GM12878 (cell line): ENCODE measurements at regions of chr1 and their contacts with region 1.

Region 1: GRCh38 chr1:14733048-14733778 is 134.7 kb downstream of the KAZN start:
- DNase-seq: peak; percentile 65
- ATAC-seq: peak; percentile 86
- H3K4me3 ChIP-seq: no peak overlapping the region
- H3K27ac ChIP-seq: peak overlapping the region; percentile 17; the same call in 1 of the 2 replicates
- H3K4me1 ChIP-seq: peaks cover 8% of the 10 kb centered on the region
- H3K27me3 ChIP-seq: no peaks in the 10 kb centered on the region
- CTCF ChIP-seq: no peak
- EP300 ChIP-seq: peak; percentile 23 to 27; a peak in 2 of 4 replicates
- POLR2A ChIP-seq: no peak
- RAD21 ChIP-seq: 0 out of 2 replicates have a peak, but pooled peaks have one; percentile 1

Region 2: DNA sequence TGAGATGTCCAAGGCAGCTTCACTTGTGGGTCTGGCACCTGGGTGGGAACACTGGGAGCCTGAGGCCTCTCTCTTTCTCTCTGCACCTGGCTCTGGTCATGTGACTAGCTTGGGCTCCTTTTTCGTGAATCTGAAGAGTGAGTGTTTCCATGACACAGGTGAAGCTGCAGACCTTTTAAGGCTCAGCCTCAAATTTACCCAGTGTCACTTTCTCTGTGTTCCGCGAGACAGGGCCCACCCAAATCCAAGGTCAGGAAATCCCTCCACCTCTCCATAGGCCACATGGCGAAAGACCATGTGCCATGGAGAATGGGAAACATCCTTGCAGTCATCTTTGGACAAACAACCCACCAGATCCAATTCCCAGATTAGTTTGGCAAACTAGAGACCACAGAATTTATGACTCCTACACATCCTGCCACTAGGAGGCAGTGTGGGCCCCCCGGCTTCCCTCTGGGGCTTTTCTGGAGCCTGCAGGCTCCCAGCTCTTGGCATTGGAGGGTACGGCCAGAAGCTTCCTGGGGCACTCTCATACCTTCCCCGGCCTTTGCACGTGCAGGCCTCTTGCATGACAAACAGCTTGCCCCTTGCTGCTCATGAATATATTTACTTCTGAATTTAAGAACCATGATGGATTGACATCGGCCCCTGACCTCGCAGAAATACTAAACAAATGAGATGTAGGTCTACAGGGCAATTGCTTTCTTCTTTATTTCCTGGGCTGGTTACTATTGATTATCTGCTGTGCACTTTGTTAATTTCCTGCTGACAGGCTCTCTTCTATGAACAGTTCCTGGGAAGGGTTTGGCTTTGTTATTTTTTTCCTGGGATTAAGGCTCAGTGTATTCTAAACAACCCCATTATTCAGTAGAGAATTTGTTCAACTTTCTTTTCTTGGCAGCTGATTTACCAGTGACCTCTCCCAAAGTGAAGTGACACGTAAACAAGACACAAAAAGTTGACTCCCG is 46.0 kb after region 1 on chr1:
- CTCF ChIA-PET with region 1: interaction called, 11 read pairs
- POLR2A ChIA-PET with region 1: no interaction called
- RAD21 ChIA-PET with region 1: no interaction called
- SMC1A ChIA-PET with region 1: interaction called, 7 read pairs
- in situ Hi-C with region 1: no loop called
- intact Hi-C with region 1: no loop called
- DNase-seq: no peak
- ATAC-seq: peak; percentile 48; the same call in 1 of the 3 replicates
- H3K4me3 ChIP-seq: no peak overlapping the region
- H3K27ac ChIP-seq: no peak overlapping the region
- H3K4me1 ChIP-seq: no peaks in the 10 kb centered on the region
- H3K27me3 ChIP-seq: no peaks in the 10 kb centered on the region
- CTCF ChIP-seq: peak; percentile 49 to 75 (median 73)
- EP300 ChIP-seq: no peak
- POLR2A ChIP-seq: no peak
- RAD21 ChIP-seq: peak; percentile 55